ENCODE measurements at regions of chr19 and their contacts with region 1.

Region 1: GRCh38 chr19:7680606-7681339 is at the start of gene TRAPPC5:
- DNase-seq: peak; percentile 88
- ATAC-seq: peak; percentile 80
- H3K4me3 Mint-ChIP-seq: peak within 1 kb of the TSS; percentile 87
- H3K27ac Mint-ChIP-seq: peak within 1 kb of the TSS; percentile 93
- H3K4me1 Mint-ChIP-seq: peaks cover 54% of the 10 kb centered on the region
- H3K27me3 Mint-ChIP-seq: peaks cover 17% of the 10 kb centered on the region
- total RNA-seq, gene TRAPPC5: 92.8 to 95.1 TPM

Region 2: GRCh38 chr19:7522072-7522922 is 158.5 kb before region 1 on chr19 and contains the start of gene MCOLN1:
- CTCF ChIA-PET with region 1: interaction called, 10 read pairs
- POLR2A ChIA-PET with region 1: no interaction called
- DNase-seq: peak; percentile 99
- ATAC-seq: peak; percentile 91
- H3K4me3 Mint-ChIP-seq: peak within 1 kb of the TSS; percentile 70
- H3K27ac Mint-ChIP-seq: peak within 1 kb of the TSS; percentile 76
- H3K4me1 Mint-ChIP-seq: peaks cover 11% of the 10 kb centered on the region
- H3K27me3 Mint-ChIP-seq: no peaks in the 10 kb centered on the region
- total RNA-seq, gene MCOLN1: 16.2 to 17.7 TPM

Region 3: GRCh38 chr19:7629347-7630054 is 51.3 kb before region 1 on chr19 and contains the starts of genes PET100 and XAB2:
- CTCF ChIA-PET with region 1: interaction called, 20 read pairs
- POLR2A ChIA-PET with region 1: interaction called, 5 read pairs
- DNase-seq: peak; percentile 97
- ATAC-seq: peak; percentile 99
- H3K4me3 Mint-ChIP-seq: peak within 1 kb of the TSS; percentile 94
- H3K27ac Mint-ChIP-seq: peak within 1 kb of the TSS; percentile 98
- H3K4me1 Mint-ChIP-seq: peaks cover 35% of the 10 kb centered on the region
- H3K27me3 Mint-ChIP-seq: no peaks in the 10 kb centered on the region
- total RNA-seq, gene PET100: 125 to 136 TPM
- total RNA-seq, gene XAB2: 44.8 to 46.9 TPM

Region 4: DNA sequence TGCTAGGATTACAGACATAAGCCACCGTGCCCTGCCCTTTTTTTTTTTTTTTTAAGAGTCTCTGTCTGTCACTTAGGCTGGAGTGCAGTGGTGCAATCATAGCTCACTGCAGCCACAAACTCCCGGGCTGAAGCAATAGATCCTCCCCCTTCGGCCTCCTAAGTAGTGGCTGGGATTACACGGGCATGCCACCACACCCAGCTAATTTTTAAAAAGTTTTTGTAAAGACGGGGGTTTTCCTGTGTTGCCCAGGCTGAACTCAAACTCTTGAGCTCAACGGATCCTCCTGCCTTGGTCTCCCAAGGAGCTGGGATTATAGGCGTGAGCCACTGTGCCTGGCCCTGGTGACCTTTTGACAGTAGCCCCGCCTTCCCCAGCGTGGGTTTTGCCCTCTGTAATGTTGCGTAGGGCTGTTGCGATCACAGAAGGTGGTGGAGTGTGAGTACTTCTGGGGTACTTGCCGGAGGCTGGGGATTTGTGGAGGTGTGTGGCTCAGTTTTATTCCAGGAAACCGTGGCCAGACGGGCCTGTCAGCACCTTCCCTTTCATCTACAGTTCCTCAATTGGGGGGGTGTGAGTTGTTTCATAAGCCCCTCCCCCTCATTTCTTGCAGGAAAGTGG is 23.5 kb before region 1 on chr19:
- CTCF ChIA-PET with region 1: interaction called, 100 read pairs
- POLR2A ChIA-PET with region 1: no interaction called
- DNase-seq: peak; percentile 58
- ATAC-seq: peak; percentile 58
- H3K4me3 Mint-ChIP-seq: peak overlapping the region; percentile 68
- H3K27ac Mint-ChIP-seq: peak overlapping the region; percentile 86
- H3K4me1 Mint-ChIP-seq: peaks cover 33% of the 10 kb centered on the region
- H3K27me3 Mint-ChIP-seq: peaks cover 2% of the 10 kb centered on the region

Region 5: DNA sequence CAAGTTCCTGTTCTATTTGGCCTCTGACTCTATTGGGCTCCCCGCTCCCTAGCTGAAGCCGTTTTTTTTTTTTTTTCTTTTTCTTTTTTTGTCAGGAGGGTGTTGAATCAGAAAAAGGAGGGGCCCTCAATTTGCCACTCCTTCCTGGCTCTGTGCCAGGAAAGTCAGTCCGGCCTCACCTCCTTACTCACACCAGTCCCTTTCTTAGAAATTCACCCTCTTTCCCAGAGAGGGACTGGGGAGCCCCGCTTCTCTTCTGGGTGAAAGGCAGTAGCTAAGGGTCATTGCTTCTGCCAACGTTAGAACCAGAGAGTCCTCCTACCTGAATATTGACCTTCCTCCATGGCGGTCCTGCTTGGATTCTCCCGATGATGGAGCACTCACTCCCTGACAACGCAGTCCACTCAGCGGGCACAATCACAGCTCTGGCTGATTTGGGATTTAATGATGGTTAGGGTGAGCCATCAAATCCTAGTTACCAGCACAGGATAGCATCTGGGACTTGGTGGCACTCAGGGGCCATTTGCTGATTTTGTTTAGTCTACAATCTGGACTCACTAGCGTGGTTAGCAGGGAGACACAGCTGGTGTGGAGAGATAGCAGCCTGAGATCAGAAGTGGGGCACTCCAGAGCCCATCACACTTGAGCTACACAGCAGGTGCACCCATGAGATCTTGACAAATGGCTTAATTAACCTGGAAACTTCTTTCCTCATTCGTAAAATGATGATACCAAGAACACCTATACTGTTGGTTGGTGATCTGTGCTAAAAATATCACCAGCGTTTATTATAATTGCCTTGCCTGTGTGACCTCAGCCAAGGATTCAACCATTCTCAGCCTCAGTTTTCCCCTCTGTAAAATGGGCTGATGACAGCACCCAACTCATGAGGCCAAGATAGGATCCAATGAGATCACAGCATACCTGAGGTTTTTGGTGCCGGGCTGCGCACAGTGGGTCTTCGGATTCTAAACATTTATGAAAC is 18.9 kb after region 1 on chr19:
- CTCF ChIA-PET with region 1: interaction called, 19 read pairs
- POLR2A ChIA-PET with region 1: no interaction called
- DNase-seq: no peak
- ATAC-seq: no peak
- H3K4me3 Mint-ChIP-seq: no peak overlapping the region
- H3K27ac Mint-ChIP-seq: no peak overlapping the region
- H3K4me1 Mint-ChIP-seq: peaks cover 17% of the 10 kb centered on the region
- H3K27me3 Mint-ChIP-seq: peaks cover 23% of the 10 kb centered on the region

Region 6: GRCh38 chr19:7806876-7807275 is 126.1 kb after region 1 on chr19:
- CTCF ChIA-PET with region 1: interaction called, 50 read pairs
- POLR2A ChIA-PET with region 1: no interaction called
- DNase-seq: no peak
- ATAC-seq: no peak
- H3K4me3 Mint-ChIP-seq: no peak overlapping the region
- H3K27ac Mint-ChIP-seq: no peak overlapping the region
- H3K4me1 Mint-ChIP-seq: peaks cover 14% of the 10 kb centered on the region
- H3K27me3 Mint-ChIP-seq: peaks cover 33% of the 10 kb centered on the region

Measured in activated CD8-positive, alpha-beta T cell treated with anti-CD3 and anti-CD28 coated beads, Interleukin-2, amount 10 ng/mL, durations not matched to agents 7 days and 5 days (primary cell).